PC-9 (cell line): ENCODE measurements at regions of chr2 and their contacts with region 1.

Region 1: GRCh38 chr2:26726229-26726628 is 33.7 kb downstream of the KCNK3 start:
- DNase-seq: no peak
- H3K4me3 ChIP-seq: no peak overlapping the region
- H3K27ac ChIP-seq: no peak overlapping the region
- H3K4me1 ChIP-seq: peaks cover 45% of the 10 kb centered on the region
- H3K27me3 ChIP-seq: no peaks in the 10 kb centered on the region
- CTCF ChIP-seq: no peak

Region 2: GRCh38 chr2:26355038-26355995 is 370.9 kb before region 1 on chr2:
- CTCF ChIA-PET with region 1: no interaction called
- POLR2A ChIA-PET with region 1: interaction called, 12 read pairs
- intact Hi-C with region 1: no loop called
- DNase-seq: peak; percentile 48 to 100
- H3K4me3 ChIP-seq: peak overlapping the region; percentile 46
- H3K27ac ChIP-seq: peak overlapping the region; percentile 99
- H3K4me1 ChIP-seq: peaks cover 63% of the 10 kb centered on the region
- H3K27me3 ChIP-seq: no peaks in the 10 kb centered on the region
- CTCF ChIP-seq: peak; percentile 17; the same call in 1 of the 2 replicates